ENCODE measurements at regions of chr20 and their contacts with region 1.

Region 1: DNA sequence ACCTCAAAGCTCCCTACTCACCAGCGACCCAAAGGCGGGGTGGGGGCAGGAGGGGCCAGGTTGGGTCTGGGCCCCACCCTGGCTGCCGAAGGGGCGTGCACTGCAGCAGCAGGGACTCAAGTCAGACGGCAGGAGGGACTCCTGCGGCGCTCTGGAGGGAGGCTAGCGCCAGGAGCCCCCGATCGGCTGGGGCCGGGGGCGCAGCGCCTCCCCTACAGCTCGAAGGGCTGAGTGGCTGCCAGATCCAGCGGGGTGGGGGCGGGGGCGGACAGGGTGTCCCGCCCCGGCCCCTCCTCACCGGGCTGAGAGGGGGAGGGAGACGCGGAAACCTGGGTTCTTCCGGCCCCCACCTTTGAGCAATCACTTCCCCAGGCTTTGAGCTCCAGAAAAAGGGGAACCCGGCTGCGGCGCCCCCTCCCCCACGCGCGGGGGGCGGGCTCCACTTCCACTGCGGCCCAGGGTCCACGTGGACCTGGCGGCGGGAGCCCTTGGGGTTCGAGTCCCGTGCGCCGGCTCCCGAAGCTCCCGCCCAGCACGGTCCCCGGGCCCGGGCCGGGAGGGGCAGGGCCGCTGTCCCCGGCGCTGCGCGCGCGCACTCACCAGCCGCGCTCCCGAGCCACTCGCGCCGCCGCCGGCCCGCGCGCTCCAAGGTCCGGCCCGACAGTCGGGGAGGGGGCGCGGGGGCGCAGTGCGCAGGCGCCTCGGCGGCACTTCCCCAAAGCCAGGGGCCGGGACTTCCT is at the start of gene RGS19:
- DNase-seq: peak; percentile 64 to 80 (median 67)
- H3K4me3 ChIP-seq: peak within 1 kb of the TSS; percentile 73 to 97
- H3K4me3 Mint-ChIP-seq: peak within 1 kb of the TSS; percentile 86 to 95 (median 90)
- H3K27ac ChIP-seq: peak within 1 kb of the TSS; percentile 74
- H3K27ac Mint-ChIP-seq: peak within 1 kb of the TSS; percentile 83 to 93 (median 92)
- H3K4me1 ChIP-seq: peaks cover 47% of the 10 kb centered on the region
- H3K4me1 Mint-ChIP-seq: peaks cover 10 to 61% (median 34%) of the 10 kb centered on the region in 4 donors
- H3K27me3 ChIP-seq: no peaks in the 10 kb centered on the region
- H3K27me3 Mint-ChIP-seq: no peaks in the 10 kb centered on the region
- total RNA-seq, gene RGS19: 35.0 to 35.6 TPM

Region 2: DNA sequence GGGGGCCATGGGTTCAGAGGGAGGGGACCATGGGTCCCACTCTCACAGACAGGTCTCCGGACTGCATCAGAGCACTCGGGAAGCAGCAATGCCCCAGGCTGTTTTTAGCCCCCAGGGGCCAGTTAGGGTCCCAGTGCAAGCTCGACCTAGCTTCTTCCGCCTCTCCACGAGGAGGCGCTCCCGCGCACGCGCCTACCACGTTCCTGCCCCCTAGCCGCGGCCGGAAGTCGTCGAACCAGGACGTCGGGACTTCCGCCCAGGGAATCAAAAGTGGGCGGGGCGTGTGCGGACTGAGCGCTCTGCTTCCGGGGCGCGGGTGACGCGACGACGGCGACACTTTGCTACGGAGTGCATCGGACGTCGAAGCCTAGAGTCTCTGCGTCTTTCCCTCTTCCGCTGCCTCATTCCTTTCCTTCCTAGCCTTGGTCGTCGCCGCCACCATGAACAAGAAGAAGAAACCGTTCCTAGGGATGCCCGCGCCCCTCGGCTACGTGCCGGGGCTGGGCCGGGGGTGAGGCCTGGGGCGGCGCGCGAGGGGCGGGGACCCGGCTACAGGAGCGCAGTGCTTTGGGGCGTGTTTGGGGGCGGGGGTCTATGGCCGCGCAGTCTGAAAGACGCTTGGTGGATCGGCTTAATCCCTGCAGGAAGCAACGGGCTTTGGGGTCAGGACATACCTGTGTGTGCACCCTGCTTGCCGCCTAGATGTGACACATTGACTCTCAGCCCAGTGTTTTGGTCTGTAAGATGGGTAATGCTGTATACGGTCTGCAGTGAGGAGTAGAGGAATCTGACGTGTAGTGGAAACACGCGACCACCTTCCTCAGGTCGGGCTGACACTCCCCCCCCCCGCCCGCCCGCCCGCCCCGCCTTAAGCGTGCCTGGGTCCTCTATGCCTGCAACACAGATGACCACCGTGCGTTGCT is 98.4 kb before region 1 on chr20 and contains the start of gene PRPF6:
- CTCF ChIA-PET with region 1: interaction called, 8 read pairs
- POLR2A ChIA-PET with region 1: interaction called, 19 read pairs
- intact Hi-C with region 1: no loop called
- DNase-seq: peak; percentile 91 to 94 (median 94)
- H3K4me3 ChIP-seq: peak within 1 kb of the TSS; percentile 42 to 67
- H3K4me3 Mint-ChIP-seq: peak within 1 kb of the TSS; percentile 90 to 99 (median 93)
- H3K27ac ChIP-seq: peak within 1 kb of the TSS; percentile 69
- H3K27ac Mint-ChIP-seq: peak within 1 kb of the TSS; percentile 95 to 99 (median 98)
- H3K4me1 ChIP-seq: peaks cover 54% of the 10 kb centered on the region
- H3K4me1 Mint-ChIP-seq: peaks cover 48 to 72% (median 60%) of the 10 kb centered on the region in 4 donors
- H3K27me3 ChIP-seq: no peaks in the 10 kb centered on the region
- H3K27me3 Mint-ChIP-seq: no peaks in the 10 kb centered on the region
- total RNA-seq, gene PRPF6: 86.4 to 88.7 TPM

Region 3: DNA sequence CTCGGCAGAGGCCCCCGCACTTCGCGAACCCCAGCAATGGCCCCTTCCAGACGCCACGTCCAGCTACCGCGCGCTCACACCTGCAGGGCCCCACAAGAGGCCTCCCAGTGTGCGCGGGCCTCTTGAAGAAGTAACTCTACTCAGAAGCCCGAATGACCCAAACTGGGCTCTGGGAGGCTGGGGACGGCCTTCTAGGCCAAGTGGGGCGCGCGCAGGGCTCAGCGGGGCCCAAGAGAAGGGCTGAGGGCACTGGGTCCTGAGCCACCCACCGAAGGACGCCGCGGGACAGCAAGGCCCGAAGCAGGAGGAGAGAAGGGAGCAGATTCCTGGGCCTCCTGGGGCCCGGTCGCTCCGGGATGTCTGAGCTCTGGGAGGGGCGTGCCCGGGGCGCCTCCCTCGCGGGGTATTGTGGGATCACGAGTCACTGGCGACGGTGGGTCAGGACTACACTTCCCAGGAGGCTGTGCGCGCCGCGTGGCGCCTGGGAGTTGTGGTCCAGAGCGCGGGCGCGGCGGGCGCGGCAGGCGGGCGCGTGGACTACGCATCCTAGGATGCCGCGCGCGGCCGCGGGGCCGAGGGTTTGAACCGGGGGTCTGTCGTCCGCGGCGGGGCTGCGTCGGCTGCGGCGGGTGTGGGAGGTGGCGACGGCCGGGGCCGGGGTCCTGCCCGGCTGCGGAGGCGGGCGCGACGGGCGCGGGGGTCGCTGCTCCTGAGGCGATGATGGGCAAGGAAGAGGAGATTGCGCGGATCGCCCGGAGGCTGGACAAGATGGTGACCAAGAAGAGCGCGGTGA is 16.7 kb before region 1 on chr20 and contains the start of gene TCEA2:
- CTCF ChIA-PET with region 1: interaction called, 6 read pairs
- POLR2A ChIA-PET with region 1: interaction called, 29 read pairs
- intact Hi-C with region 1: loop called (anchors 1 kb)
- DNase-seq: peak; percentile 90 to 91 (median 90)
- H3K4me3 ChIP-seq: peak within 1 kb of the TSS; percentile 42 to 57
- H3K4me3 Mint-ChIP-seq: peak within 1 kb of the TSS; percentile 80 to 93 (median 88)
- H3K27ac ChIP-seq: peak within 1 kb of the TSS; percentile 59
- H3K27ac Mint-ChIP-seq: peak within 1 kb of the TSS; percentile 50 to 92 (median 86)
- H3K4me1 ChIP-seq: peaks cover 57% of the 10 kb centered on the region
- H3K4me1 Mint-ChIP-seq: peaks cover 21 to 47% (median 35%) of the 10 kb centered on the region in 4 donors
- H3K27me3 ChIP-seq: no peaks in the 10 kb centered on the region
- H3K27me3 Mint-ChIP-seq: no peaks in the 10 kb centered on the region
- total RNA-seq, gene TCEA2: 43.3 to 45.9 TPM

Region 4: DNA sequence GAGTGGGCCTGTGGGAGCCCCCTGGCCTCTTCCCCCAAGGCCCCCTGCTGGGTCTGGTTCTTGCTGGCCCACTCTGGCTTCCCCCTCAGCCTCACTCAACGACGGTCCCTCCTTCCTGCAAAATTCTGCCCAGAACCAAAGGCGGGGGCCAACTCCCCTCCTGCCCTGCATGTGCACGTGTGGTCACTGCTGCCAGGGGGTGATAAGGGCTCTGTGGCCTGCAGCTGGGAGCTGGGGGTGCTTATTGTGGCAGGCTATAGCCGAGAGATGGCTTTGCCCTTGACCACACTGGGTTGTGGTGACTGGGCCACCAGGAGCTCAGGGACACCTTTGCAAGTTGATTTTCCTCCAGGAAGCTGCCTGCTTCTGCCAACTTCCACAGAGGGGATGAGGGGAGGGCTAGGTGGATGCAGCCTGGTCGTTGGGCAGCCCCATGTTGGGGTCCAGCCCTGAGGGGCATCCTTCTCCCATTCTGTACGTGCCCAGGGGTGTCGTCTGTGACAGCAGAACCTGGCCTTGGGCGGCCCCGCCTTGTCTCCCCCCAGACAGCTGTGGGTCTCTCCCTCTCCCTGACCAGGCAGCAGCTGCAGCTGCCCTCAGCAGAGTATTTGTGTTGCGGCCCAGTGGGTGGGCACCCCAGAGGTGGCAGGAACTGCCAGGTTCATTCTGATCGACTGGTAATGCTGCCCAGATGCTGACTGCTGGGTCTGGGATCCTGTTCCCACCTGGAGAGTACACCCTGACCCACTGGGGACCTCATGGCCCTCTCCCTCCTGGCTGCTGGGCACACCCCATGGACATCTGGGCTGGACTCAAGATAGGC is 10.8 kb before region 1 on chr20:
- CTCF ChIA-PET with region 1: interaction called, 7 read pairs
- POLR2A ChIA-PET with region 1: interaction called, 27 read pairs
- intact Hi-C with region 1: loop called (anchors 1 kb)
- DNase-seq: no peak
- H3K4me3 ChIP-seq: no peak overlapping the region
- H3K4me3 Mint-ChIP-seq: no peak overlapping the region
- H3K27ac ChIP-seq: no peak overlapping the region
- H3K27ac Mint-ChIP-seq: peak overlapping the region in 1 of 7 donors; percentile 65
- H3K4me1 ChIP-seq: peaks cover 54% of the 10 kb centered on the region
- H3K4me1 Mint-ChIP-seq: peaks cover 20 to 47% (median 37%) of the 10 kb centered on the region in 4 donors
- H3K27me3 ChIP-seq: no peaks in the 10 kb centered on the region
- H3K27me3 Mint-ChIP-seq: no peaks in the 10 kb centered on the region

Region 5: DNA sequence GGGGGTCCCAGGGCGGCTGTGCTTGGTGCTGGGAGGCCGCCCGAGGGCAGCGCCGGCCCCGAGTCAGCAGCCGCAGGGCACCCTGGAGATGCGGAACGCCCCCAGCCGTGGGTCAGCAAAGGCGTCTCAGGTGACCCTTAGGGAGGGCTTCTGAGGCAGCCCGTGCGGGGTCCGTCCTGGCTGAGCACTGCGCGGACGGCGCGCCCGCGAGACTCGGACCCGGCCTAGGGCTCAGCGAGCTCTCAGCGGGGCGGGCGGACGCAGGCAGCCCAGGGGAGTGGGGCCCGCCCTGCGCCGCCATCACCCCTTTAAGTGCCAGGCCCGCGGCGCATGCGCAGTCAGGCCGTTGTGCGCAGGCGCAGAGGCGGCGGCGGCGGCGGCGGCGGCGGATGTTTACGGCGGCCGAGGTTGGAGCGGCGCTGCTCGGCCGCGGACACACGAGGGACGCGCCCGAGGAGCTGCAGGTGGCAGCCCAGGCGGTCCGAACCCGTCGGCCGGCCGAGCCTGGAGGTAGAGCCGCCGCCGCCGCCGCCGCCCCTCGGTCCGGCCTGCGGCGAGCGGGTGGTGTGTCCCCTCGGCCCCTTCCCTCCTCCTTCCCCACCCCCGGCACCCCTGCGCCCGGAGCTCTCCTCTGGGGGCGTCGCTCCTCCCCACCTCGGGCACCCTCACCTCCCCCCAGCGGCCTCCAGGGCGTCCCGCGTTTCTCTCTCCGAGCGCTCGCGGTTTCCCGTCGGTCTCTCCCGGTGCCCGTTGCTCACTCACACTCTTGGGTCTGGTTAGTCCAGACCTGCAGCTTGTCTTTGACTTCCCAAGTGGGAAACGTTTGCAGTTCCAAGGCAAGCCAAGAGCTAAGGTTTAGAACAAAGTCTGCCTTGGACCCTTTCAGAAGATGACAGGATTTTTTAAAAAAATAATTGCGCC is 176.2 kb after region 1 on chr20 and contains the start of gene PCMTD2:
- CTCF ChIA-PET with region 1: interaction called, 3 read pairs
- POLR2A ChIA-PET with region 1: interaction called, 12 read pairs
- intact Hi-C with region 1: loop called (anchors 2 kb)
- DNase-seq: peak; percentile 76 to 93 (median 86)
- H3K4me3 ChIP-seq: peak within 1 kb of the TSS; percentile 73 to 77
- H3K4me3 Mint-ChIP-seq: peak within 1 kb of the TSS; percentile 90 to 97 (median 94)
- H3K27ac ChIP-seq: peak within 1 kb of the TSS; percentile 63
- H3K27ac Mint-ChIP-seq: peak within 1 kb of the TSS; percentile 92 to 99 (median 94)
- H3K4me1 ChIP-seq: peaks cover 55% of the 10 kb centered on the region
- H3K4me1 Mint-ChIP-seq: peaks cover 43 to 62% (median 50%) of the 10 kb centered on the region in 4 donors
- H3K27me3 ChIP-seq: peaks cover 5% of the 10 kb centered on the region
- H3K27me3 Mint-ChIP-seq: peaks cover 2 to 5% of the 10 kb centered on the region in 2 donors
- total RNA-seq, gene PCMTD2: 187 to 196 TPM